CD8-positive, alpha-beta memory T cell (primary cell): ENCODE measurements at regions of chr1 and their contacts with region 1.

Region 1: GRCh38 chr1:153494976-153495535 is 34.6 kb upstream of the S100A7 start:
- DNase-seq: peak; percentile 38 to 78 (median 61)
- H3K4me3 ChIP-seq: no peak overlapping the region
- H3K4me3 Mint-ChIP-seq: no peak overlapping the region
- H3K27ac ChIP-seq: no peak overlapping the region
- H3K27ac Mint-ChIP-seq: no peak overlapping the region
- H3K4me1 ChIP-seq: no peaks in the 10 kb centered on the region
- H3K4me1 Mint-ChIP-seq: no peaks in the 10 kb centered on the region
- H3K27me3 ChIP-seq: peaks cover 5% of the 10 kb centered on the region
- H3K27me3 Mint-ChIP-seq: peaks cover 25 to 53% of the 10 kb centered on the region in 2 donors

Region 2: DNA sequence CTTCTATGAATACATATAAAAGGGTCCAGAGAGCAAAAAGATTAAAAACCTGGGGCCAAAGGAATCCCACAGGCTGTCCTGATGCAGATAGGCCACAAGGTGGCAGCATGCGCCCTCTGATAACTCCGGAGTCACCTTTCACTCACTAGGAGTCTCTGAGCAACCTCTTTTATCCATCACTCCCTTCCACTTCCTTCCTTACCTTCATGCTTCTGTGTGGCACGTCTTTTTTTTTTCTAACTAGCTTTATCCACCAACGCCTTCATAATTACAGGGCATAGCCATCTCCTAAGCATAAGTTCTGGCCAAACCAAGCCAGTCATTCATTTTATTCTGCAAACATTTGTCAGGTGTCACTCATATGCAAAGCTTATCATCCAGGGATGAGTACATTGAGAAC is 142.5 kb before region 1 on chr1:
- CTCF ChIA-PET with region 1: interaction called, 35 read pairs
- POLR2A ChIA-PET with region 1: no interaction called
- DNase-seq: peak; percentile 36 to 69 (median 46)
- H3K4me3 ChIP-seq: no peak overlapping the region
- H3K4me3 Mint-ChIP-seq: no peak overlapping the region
- H3K27ac ChIP-seq: no peak overlapping the region
- H3K27ac Mint-ChIP-seq: no peak overlapping the region
- H3K4me1 ChIP-seq: peaks cover 6% of the 10 kb centered on the region
- H3K4me1 Mint-ChIP-seq: peaks cover 4 to 11% (median 11%) of the 10 kb centered on the region in 3 donors
- H3K27me3 ChIP-seq: no peaks in the 10 kb centered on the region
- H3K27me3 Mint-ChIP-seq: peaks cover 17 to 49% of the 10 kb centered on the region in 2 donors